ENCODE measurements at regions of chr2 and their contacts with region 1.

Region 1: GRCh38 chr2:30165050-30165520 is 18.3 kb downstream of the YPEL5 start:
- DNase-seq: peak; percentile 77
- CTCF ChIP-seq: peak; percentile 73

Region 2: DNA sequence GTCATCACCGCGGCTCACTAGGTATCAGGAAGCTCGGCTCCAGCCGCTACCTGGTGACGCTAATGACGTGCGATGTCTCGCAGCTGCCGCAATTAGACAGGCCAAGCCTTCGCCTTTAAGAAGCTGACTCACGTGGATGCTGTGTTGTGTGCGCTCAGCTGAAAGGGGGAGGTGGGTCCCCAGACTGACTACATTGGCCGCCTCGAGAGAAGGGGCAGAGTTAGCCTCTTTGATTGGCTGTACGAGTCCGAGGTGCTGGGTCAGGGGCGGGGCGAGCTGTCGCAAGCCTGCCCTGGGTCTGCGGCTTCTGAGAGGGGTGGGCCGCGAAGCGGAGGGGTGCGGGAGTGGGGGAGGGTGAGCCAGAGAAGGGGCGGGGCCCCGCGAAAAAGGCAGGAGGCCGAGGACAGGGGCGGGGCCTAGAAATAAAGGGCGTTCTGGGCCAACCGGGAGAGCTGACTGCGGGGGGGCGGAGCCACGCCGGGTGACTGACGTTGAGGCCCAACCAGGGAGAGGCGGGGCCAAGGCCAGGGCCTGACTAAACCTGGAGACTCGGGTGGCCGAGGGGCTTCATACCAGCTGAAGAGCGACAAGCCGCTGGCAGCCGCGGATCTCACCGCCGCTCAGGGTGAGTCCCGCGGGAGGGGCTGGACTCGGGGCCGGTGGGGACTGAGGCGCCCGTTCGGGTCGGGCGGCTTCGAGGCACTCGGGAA is 18.5 kb before region 1 on chr2 and contains the start of gene YPEL5:
- CTCF ChIA-PET with region 1: interaction called, 97 read pairs
- POLR2A ChIA-PET with region 1: interaction called, 4 read pairs
- DNase-seq: peak; percentile 98
- CTCF ChIP-seq: no peak

Region 3: DNA sequence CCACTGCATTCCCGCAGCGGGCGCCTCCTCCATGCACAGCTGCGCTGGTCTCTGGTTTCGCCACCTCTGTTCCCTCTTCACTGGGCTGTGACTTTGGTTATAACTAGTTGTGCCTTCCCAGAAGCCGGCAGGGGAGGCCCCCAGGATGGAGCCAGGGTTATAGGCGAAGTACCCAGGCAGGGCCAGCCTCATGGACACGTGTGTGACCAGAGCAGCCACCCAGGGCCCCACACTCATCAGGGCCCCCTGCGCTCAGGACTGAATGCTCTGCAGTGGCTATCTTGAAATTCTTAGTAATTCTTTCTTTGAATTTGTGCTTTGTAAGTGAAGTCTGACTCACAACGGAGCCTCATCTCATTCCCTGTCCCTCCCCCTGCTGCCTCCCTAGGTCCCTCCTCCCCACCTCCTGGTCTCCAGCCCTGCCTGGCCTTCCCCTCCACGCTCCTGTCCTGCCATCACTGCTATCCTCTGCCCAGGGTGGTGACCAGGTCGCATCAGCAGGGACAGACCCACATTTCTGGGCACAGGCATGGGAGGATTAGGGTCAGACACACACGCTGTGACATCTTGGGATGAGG is 28.1 kb after region 1 on chr2:
- CTCF ChIA-PET with region 1: interaction called, 12 read pairs
- POLR2A ChIA-PET with region 1: no interaction called
- DNase-seq: no peak
- CTCF ChIP-seq: no peak

Region 4: GRCh38 chr2:30217644-30218337 is 52.7 kb after region 1 on chr2:
- CTCF ChIA-PET with region 1: interaction called, 15 read pairs
- POLR2A ChIA-PET with region 1: no interaction called
- DNase-seq: no peak
- CTCF ChIP-seq: no peak

Region 5: DNA sequence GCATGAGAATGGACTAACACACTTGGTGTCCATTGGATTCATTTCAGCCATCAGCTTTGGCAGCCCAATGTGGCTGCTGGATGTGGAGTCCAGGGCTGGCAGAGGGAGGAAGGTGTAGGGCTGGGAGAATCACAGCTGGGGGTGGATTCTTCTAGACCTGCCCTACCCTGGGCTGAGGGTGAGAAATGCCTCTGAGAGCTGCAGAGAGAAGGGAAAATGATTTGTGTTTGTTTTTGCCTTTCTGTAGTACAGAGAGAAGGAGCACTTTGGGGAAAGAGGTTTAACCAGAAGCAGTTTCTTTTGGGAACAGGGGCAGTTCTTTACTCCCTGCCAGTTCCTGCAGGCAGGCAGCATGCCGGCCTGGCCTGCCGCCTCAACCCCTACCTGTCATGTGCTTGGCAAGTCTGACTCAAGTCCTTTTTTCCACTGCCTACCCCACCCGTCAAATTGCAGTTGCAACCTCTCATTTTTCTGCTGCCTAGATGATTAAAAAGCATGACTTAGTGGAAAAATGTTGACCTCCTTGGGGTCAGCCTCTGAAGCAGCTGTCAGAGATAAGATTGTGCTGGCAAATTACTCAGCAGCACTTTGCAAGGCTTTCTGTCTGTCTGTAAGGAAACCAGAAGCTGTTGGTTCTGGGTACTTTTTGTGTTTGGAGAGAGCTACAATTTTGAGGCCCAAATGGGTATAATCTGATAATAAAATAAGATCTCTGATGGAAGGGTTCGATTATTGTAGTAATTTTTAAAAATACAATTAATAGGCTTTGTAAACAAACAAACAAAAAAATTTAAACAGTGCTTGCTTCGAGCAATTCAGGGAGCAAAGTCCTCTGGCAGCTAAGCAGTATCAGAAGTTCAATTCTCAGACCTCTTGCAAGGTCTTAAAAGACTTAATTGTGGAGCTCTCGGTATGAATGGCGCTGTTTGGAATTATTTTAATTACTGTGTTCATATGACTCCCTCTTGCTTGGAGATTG is 87.9 kb after region 1 on chr2:
- CTCF ChIA-PET with region 1: interaction called, 10 read pairs
- POLR2A ChIA-PET with region 1: no interaction called
- DNase-seq: peak; percentile 44
- CTCF ChIP-seq: no peak

Measured in GM10248 (cell line).